ENCODE measurements at regions of chr1 and their contacts with region 1.

Region 1: DNA sequence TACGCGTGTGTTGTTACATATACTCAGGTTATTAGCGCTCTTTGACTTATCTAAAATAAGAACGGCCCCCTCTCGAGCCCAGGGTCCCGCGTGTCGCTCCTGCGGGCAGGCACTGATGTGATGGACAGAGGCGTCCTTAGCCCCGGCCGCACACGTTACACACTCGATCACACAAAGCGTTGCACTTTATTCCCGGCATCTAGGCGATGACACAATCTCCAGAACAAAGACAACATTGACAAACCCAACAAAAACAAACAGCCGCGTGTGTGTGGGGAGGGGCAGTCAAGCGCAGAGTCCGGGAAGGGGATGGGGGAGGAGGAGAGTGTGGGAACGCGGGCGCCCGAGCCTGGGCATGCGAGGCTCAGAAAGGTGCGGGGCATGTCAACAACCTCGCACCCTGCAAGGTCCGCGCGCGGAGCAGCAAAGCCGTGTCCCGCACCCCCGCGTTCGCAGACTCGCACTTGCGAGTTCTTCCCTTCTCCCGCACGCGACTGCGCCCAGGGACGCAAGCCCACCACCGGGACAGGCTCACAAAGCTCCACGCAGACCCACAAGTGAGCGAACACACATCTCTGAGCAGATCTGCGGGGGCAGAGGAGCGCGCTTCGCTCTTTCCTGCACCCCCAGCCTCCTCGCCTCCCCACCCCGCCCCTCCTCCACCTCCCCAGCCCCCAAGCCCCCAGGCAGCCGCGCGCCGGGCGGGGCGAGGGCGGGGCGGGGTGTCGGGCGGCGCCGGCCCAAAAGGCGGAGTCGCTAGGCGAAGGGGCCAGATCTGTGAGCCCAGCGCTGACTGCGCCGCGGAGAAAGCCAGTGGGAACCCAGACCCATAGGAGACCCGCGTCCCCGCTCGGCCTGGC is at the start of gene EFNA1:
- DNase-seq: peak; percentile 99
- ATAC-seq: peak; percentile 61
- H3K4me3 ChIP-seq: peak within 1 kb of the TSS; percentile 96 to 99 (median 99)
- H3K27ac ChIP-seq: peak within 1 kb of the TSS; percentile 100
- H3K4me1 ChIP-seq: peaks cover 46% of the 10 kb centered on the region
- H3K27me3 ChIP-seq: no peaks in the 10 kb centered on the region; a peak in 1 of 5 replicates
- CTCF ChIP-seq: no peak
- EP300 ChIP-seq: peak; percentile 96 to 99
- POLR2A ChIP-seq: peak in 1 of 2 experiments; percentile 92; a peak in 2 of 4 replicates
- RAD21 ChIP-seq: peak; percentile 18
- total RNA-seq, gene EFNA1: 41.2 and 81.8 TPM in 2 replicates

Region 2: DNA sequence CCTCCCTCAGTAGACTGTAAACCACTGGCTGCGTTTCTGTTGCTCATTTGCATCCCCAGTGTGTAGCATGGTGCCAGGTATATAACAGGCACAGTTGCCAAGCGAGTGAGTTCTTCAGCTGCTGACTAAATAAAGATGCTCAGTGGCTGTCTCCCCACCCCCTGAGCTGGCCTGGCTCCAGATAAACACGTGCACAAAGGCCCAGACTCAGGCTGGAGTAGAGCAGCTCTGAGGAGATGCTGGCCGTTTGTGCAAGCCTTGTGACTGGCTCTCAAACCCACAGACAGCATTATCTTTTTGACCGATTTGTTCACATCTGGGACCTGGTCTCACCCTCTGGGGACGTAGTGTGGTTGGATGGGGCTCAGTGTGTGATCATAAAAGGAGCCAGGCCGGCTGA is 552.6 kb before region 1 on chr1:
- CTCF ChIA-PET with region 1: no interaction called
- POLR2A ChIA-PET with region 1: no interaction called
- in situ Hi-C with region 1: no loop called
- intact Hi-C with region 1: no loop called
- DNase-seq: no peak
- ATAC-seq: no peak; the same call in 2 of the 3 replicates
- H3K4me3 ChIP-seq: no peak overlapping the region
- H3K27ac ChIP-seq: no peak overlapping the region
- H3K4me1 ChIP-seq: no peaks in the 10 kb centered on the region
- H3K27me3 ChIP-seq: peaks cover 0 to 3% of the 10 kb centered on the region in 2 experiments; a peak in 1 of 5 replicates
- CTCF ChIP-seq: no peak
- EP300 ChIP-seq: no peak
- POLR2A ChIP-seq: no peak
- RAD21 ChIP-seq: no peak

Region 3: GRCh38 chr1:155084722-155085503 is 42.4 kb before region 1 on chr1:
- CTCF ChIA-PET with region 1: no interaction called
- POLR2A ChIA-PET with region 1: interaction called, 19 read pairs
- in situ Hi-C with region 1: loop called (anchors 5 kb)
- intact Hi-C with region 1: loop called (anchors 5 kb)
- DNase-seq: peak; percentile 82
- ATAC-seq: peak; percentile 82
- H3K4me3 ChIP-seq: peak overlapping the region; percentile 72 to 89 (median 75)
- H3K27ac ChIP-seq: peak overlapping the region; percentile 74
- H3K4me1 ChIP-seq: peaks cover 83% of the 10 kb centered on the region
- H3K27me3 ChIP-seq: peaks cover 22 to 44% of the 10 kb centered on the region in 2 experiments
- CTCF ChIP-seq: peak; percentile 99
- EP300 ChIP-seq: no peak
- POLR2A ChIP-seq: no peak
- RAD21 ChIP-seq: peak; percentile 94

Region 4: GRCh38 chr1:155105604-155106022 is 21.7 kb before region 1 on chr1:
- CTCF ChIA-PET with region 1: no interaction called
- POLR2A ChIA-PET with region 1: interaction called, 32 read pairs
- in situ Hi-C with region 1: no loop called
- intact Hi-C with region 1: loop called (anchors 2 kb)
- DNase-seq: no peak
- ATAC-seq: peak; percentile 18; the same call in 2 of the 3 replicates
- H3K4me3 ChIP-seq: no peak overlapping the region; a peak in 1 of 6 replicates
- H3K27ac ChIP-seq: peak overlapping the region; percentile 23
- H3K4me1 ChIP-seq: peaks cover 70% of the 10 kb centered on the region
- H3K27me3 ChIP-seq: no peaks in the 10 kb centered on the region
- CTCF ChIP-seq: no peak
- EP300 ChIP-seq: no peak
- POLR2A ChIP-seq: no peak
- RAD21 ChIP-seq: no peak

Region 5: GRCh38 chr1:155167166-155168104 is 40.1 kb after region 1 on chr1:
- CTCF ChIA-PET with region 1: interaction called, 3 read pairs
- POLR2A ChIA-PET with region 1: interaction called, 56 read pairs
- in situ Hi-C with region 1: no loop called
- intact Hi-C with region 1: loop called (anchors 2 kb)
- DNase-seq: peak; percentile 82
- ATAC-seq: peak; percentile 87
- H3K4me3 ChIP-seq: peak overlapping the region; percentile 37 to 75 (median 48); a peak in 5 of 6 replicates
- H3K27ac ChIP-seq: no peak overlapping the region
- H3K4me1 ChIP-seq: peaks cover 36% of the 10 kb centered on the region
- H3K27me3 ChIP-seq: 0 out of 5 replicates have a peak, but pooled peaks cover 0 to 8% of the 10 kb centered on the region in 2 experiments
- CTCF ChIP-seq: peak; percentile 95
- EP300 ChIP-seq: no peak
- POLR2A ChIP-seq: no peak
- RAD21 ChIP-seq: peak; percentile 97

Region 6: GRCh38 chr1:156082309-156083091 is 955.2 kb after region 1 on chr1 and contains the start of gene MEX3A:
- CTCF ChIA-PET with region 1: no interaction called
- POLR2A ChIA-PET with region 1: no interaction called
- in situ Hi-C with region 1: no loop called
- intact Hi-C with region 1: loop called (anchors 5 kb)
- DNase-seq: peak; percentile 75
- ATAC-seq: peak; percentile 77
- H3K4me3 ChIP-seq: peak within 1 kb of the TSS; percentile 88 to 94 (median 89)
- H3K27ac ChIP-seq: peak within 1 kb of the TSS; percentile 77
- H3K4me1 ChIP-seq: peaks cover 71% of the 10 kb centered on the region
- H3K27me3 ChIP-seq: no peaks in the 10 kb centered on the region; a peak in 1 of 5 replicates
- CTCF ChIP-seq: peak; percentile 10; the same call in 1 of the 2 replicates
- EP300 ChIP-seq: no peak
- POLR2A ChIP-seq: peak; percentile 21 to 45; a peak in 2 of 4 replicates
- RAD21 ChIP-seq: no peak
- total RNA-seq, gene MEX3A: 7.6 TPM in 2 replicates